T-cell (primary cell): ENCODE measurements at regions of chr14 and their contacts with region 1.

Region 1: DNA sequence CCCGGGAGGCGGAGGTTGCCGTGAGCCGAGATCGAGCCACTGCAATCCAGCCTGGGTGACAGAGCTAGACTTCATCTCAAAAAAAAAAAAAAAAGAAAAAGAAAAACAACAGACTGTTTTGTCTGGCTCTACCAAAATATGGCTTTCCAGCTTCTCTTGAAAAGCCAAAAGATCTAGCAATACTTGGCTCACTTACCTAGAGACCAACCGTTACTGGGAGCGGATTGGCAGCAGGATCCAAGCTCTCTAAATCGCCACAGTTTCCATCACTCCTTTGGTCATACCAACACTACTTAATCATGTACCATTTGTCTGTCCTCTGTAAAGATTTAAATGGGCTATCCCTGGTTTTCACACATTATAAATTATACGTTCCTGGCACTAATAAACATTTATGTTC is 87.6 kb upstream of the GPHB5 start:
- DNase-seq: no peak
- ATAC-seq: no peak
- H3K4me3 ChIP-seq: no peak overlapping the region
- H3K4me3 Mint-ChIP-seq: no peak overlapping the region
- H3K27ac ChIP-seq: no peak overlapping the region
- H3K27ac Mint-ChIP-seq: no peak overlapping the region
- H3K4me1 ChIP-seq: no peaks in the 10 kb centered on the region
- H3K4me1 Mint-ChIP-seq: peaks cover 21 to 28% (median 22%) of the 10 kb centered on the region in 3 donors
- H3K27me3 ChIP-seq: no peaks in the 10 kb centered on the region
- H3K27me3 Mint-ChIP-seq: no peaks in the 10 kb centered on the region

Region 2: DNA sequence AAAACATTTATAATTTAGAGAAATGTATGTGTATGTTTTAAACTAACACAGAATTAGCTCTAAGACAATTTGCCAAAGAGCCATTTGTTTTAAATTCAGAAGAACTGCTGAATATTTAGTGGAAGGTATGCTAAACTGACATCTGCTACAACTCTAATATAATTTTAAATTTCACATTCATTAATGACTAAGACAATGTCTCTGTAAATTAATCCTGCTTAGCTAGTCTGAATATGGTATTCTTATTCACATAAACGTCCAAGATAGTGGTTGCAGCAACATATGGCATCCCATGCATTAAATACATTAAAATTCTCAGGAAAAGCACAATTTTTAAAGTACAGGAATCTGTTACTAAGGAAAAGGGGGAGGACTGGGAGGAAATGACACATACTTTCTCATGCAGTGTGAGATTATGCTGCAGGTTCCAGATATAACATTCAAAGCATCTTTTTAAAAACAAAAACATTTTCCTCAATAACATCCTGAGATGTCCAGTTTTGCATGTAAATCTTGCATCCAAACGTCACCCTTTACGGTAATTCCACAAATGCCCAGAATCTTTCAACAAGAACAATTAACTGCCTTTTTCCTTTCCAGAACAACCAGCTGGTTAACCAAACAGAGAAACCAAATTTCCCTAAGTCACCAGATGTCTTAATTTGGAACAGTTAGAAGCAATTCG is 208.5 kb after region 1 on chr14:
- CTCF ChIA-PET with region 1: no interaction called
- POLR2A ChIA-PET with region 1: no interaction called
- DNase-seq: no peak
- ATAC-seq: no peak
- H3K4me3 ChIP-seq: no peak overlapping the region
- H3K4me3 Mint-ChIP-seq: no peak overlapping the region
- H3K27ac ChIP-seq: no peak overlapping the region
- H3K27ac Mint-ChIP-seq: peak overlapping the region in 1 of 2 donors; percentile 52
- H3K4me1 ChIP-seq: no peaks in the 10 kb centered on the region
- H3K4me1 Mint-ChIP-seq: peaks cover 45 to 50% (median 49%) of the 10 kb centered on the region in 3 donors
- H3K27me3 ChIP-seq: no peaks in the 10 kb centered on the region
- H3K27me3 Mint-ChIP-seq: no peaks in the 10 kb centered on the region

Region 3: GRCh38 chr14:64137657-64138290 is 731.4 kb after region 1 on chr14:
- CTCF ChIA-PET with region 1: no interaction called
- POLR2A ChIA-PET with region 1: interaction called in 1 of 2 experiments, 11 read pairs
- DNase-seq: no peak
- ATAC-seq: no peak
- H3K4me3 ChIP-seq: no peak overlapping the region
- H3K4me3 Mint-ChIP-seq: no peak overlapping the region
- H3K27ac ChIP-seq: no peak overlapping the region
- H3K27ac Mint-ChIP-seq: no peak overlapping the region
- H3K4me1 ChIP-seq: no peaks in the 10 kb centered on the region
- H3K4me1 Mint-ChIP-seq: no peaks in the 10 kb centered on the region
- H3K27me3 ChIP-seq: no peaks in the 10 kb centered on the region
- H3K27me3 Mint-ChIP-seq: no peaks in the 10 kb centered on the region